CD4-positive, alpha-beta memory T cell (primary cell): ENCODE measurements at regions of chr10 and their contacts with region 1.

Region 1: DNA sequence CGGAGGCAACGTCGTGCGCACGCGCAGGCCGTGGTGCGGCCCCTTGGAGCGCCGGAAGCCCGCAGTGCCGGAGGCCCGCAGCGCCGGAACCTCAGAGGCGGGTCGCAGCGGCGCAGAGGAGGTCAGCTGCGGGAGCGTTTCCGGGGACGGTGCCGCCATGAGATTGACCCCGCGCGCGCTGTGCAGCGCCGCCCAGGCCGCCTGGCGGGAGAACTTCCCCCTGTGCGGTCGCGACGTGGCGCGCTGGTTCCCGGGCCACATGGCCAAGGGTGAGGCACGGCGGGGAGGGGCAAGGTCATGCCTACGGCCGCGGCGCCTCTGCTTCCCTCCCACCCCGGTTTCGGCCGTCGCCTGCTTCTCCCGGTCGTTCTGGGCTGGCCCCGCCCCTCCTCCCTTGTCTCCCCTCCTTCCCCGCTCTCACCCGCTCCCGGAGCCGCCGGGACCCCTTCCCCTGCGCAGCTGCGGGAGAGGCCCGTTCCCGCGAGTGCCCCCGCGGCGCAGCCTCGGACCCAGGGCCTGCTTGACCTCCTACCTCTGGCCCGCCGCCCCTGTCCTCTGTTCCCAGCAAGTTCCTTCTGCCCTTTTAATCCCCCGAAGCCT is at the start of gene MTG1:
- DNase-seq: peak; percentile 85 to 93 (median 89)
- H3K4me3 ChIP-seq: peak within 1 kb of the TSS; percentile 69 to 89
- H3K4me3 Mint-ChIP-seq: peak within 1 kb of the TSS; percentile 88 to 95 (median 90)
- H3K27ac ChIP-seq: peak within 1 kb of the TSS; percentile 78
- H3K27ac Mint-ChIP-seq: peak within 1 kb of the TSS; percentile 83 to 94 (median 88)
- H3K4me1 ChIP-seq: peaks cover 60% of the 10 kb centered on the region
- H3K4me1 Mint-ChIP-seq: peaks cover 28 to 65% (median 44%) of the 10 kb centered on the region in 4 donors
- H3K27me3 ChIP-seq: no peaks in the 10 kb centered on the region
- H3K27me3 Mint-ChIP-seq: no peaks in the 10 kb centered on the region
- total RNA-seq, gene MTG1: 64.8 to 65.4 TPM

Region 2: GRCh38 chr10:132163278-132163765 is 1230.8 kb before region 1 on chr10:
- CTCF ChIA-PET with region 1: no interaction called
- POLR2A ChIA-PET with region 1: no interaction called
- intact Hi-C with region 1: no loop called
- DNase-seq: peak in 4 of 5 donors; percentile 32 to 64 (median 40)
- H3K4me3 ChIP-seq: no peak overlapping the region
- H3K4me3 Mint-ChIP-seq: peak overlapping the region in 1 of 8 donors; percentile 54
- H3K27ac ChIP-seq: no peak overlapping the region
- H3K27ac Mint-ChIP-seq: peak overlapping the region in 6 of 7 donors; percentile 17 to 99 (median 88)
- H3K4me1 ChIP-seq: peaks cover 28% of the 10 kb centered on the region
- H3K4me1 Mint-ChIP-seq: peaks cover 16 to 46% (median 34%) of the 10 kb centered on the region in 4 donors
- H3K27me3 ChIP-seq: no peaks in the 10 kb centered on the region
- H3K27me3 Mint-ChIP-seq: no peaks in the 10 kb centered on the region

Region 3: DNA sequence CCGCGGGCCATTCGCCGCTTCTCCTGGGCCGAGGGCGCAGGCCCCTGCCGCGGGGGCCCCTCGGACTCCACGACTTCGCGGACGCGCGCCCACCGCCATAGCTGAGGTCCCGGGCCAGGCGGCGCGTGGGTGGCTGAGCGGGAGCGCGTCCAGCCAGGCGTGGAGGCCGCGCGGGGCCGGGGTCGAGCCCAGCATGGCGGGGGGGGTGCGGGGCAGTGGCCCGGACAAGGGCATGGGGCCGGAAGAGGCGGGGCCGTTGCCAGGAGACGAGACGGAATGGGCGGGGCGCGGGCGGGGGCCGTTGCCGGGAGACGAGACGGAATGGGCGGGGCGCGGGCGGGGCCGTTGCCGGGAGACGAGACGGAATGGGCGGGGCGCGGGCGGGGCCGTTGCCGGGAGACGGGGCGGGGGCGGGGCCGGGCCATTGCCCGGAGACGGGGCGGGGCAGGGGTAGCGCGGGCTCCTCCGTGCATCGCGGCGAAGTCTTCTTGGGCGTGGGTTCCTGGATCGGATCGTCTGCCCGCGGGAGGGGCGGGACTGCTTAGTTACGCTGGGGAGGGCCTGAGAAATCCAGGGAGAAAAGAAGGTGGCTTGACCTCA is 132.3 kb before region 1 on chr10:
- CTCF ChIA-PET with region 1: no interaction called
- POLR2A ChIA-PET with region 1: interaction called, 3 read pairs
- intact Hi-C with region 1: loop called (anchors 5 kb)
- DNase-seq: peak; percentile 75 to 83 (median 78)
- H3K4me3 ChIP-seq: peak overlapping the region in 1 of 2 donors; percentile 46
- H3K4me3 Mint-ChIP-seq: peak overlapping the region; percentile 70 to 79 (median 76)
- H3K27ac ChIP-seq: peak overlapping the region; percentile 83
- H3K27ac Mint-ChIP-seq: peak overlapping the region; percentile 90 to 98 (median 92)
- H3K4me1 ChIP-seq: peaks cover 85% of the 10 kb centered on the region
- H3K4me1 Mint-ChIP-seq: peaks cover 29 to 86% (median 66%) of the 10 kb centered on the region in 4 donors
- H3K27me3 ChIP-seq: no peaks in the 10 kb centered on the region
- H3K27me3 Mint-ChIP-seq: peaks cover 0 to 4% of the 10 kb centered on the region in 2 donors

Region 4: DNA sequence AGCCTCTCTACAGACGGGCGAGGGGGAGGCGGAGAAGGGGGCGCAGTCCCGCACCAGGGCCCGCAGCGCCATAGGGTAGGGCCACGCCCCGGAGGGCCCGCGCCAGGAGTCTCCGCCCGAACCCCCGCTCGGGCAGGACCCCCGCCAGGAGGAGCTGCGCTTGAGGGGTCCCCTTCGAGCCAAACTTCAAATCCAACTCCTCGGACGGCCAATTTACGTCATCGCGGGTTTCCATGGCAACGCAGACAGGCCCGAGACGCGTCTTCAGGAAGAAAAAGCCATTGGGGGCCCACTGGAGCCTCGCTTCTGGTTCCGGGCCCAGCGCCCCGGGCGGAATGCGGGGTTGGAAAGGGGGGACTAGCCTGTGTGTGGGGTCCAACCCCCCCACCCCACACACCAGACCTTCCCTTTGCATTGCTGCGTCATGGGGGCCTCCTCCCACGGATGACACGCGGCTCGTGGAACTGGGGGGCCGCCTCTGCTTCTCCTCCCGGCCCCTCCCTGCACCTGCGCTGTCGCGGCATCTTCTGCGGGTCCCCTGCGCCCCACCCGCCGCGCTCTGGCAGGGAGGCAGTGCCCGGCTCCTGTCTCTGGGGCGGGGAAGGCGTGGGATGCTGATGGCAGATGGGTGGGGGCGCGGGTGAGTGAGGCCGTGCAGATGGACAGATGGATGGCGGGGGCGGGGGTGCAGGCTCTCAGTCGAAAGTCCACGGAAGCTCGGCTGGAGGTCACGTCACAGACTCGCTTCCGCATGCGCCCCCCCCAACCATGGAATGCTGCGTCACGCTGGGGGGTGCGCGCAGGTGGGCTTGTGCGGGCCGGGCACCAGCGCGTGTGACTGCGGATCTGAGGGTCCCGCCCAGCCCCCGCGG is 58.7 kb before region 1 on chr10:
- CTCF ChIA-PET with region 1: interaction called, 26 read pairs
- POLR2A ChIA-PET with region 1: interaction called, 25 read pairs
- intact Hi-C with region 1: loop called (anchors 2 kb)
- DNase-seq: peak; percentile 85 to 95 (median 86)
- H3K4me3 ChIP-seq: peak overlapping the region in 1 of 2 donors; percentile 57
- H3K4me3 Mint-ChIP-seq: peak overlapping the region; percentile 69 to 90 (median 78)
- H3K27ac ChIP-seq: peak overlapping the region; percentile 64
- H3K27ac Mint-ChIP-seq: peak overlapping the region in 6 of 7 donors; percentile 90 to 98 (median 94)
- H3K4me1 ChIP-seq: peaks cover 25% of the 10 kb centered on the region
- H3K4me1 Mint-ChIP-seq: peaks cover 0 to 22% (median 3%) of the 10 kb centered on the region in 4 donors
- H3K27me3 ChIP-seq: no peaks in the 10 kb centered on the region
- H3K27me3 Mint-ChIP-seq: peaks cover 0 to 1% of the 10 kb centered on the region in 2 donors

Region 5: GRCh38 chr10:133357285-133358151 is 36.6 kb before region 1 on chr10 and contains the start of gene FUOM:
- CTCF ChIA-PET with region 1: no interaction called
- POLR2A ChIA-PET with region 1: interaction called, 38 read pairs
- intact Hi-C with region 1: loop called (anchors 5 kb)
- DNase-seq: peak; percentile 76 to 79 (median 77)
- H3K4me3 ChIP-seq: peak within 1 kb of the TSS in 1 of 2 donors; percentile 63
- H3K4me3 Mint-ChIP-seq: peak within 1 kb of the TSS; percentile 67 to 82 (median 78)
- H3K27ac ChIP-seq: peak within 1 kb of the TSS; percentile 52
- H3K27ac Mint-ChIP-seq: peak within 1 kb of the TSS in 4 of 7 donors; percentile 43 to 62 (median 56)
- H3K4me1 ChIP-seq: peaks cover 8% of the 10 kb centered on the region
- H3K4me1 Mint-ChIP-seq: peaks cover 0 to 9% (median 5%) of the 10 kb centered on the region in 4 donors
- H3K27me3 ChIP-seq: no peaks in the 10 kb centered on the region
- H3K27me3 Mint-ChIP-seq: no peaks in the 10 kb centered on the region
- total RNA-seq, gene FUOM: 17.1 to 18.1 TPM

Region 6: GRCh38 chr10:133373104-133373624 is 21.0 kb before region 1 on chr10 and contains the start of gene ECHS1:
- CTCF ChIA-PET with region 1: interaction called, 6 read pairs
- POLR2A ChIA-PET with region 1: interaction called, 68 read pairs
- intact Hi-C with region 1: loop called (anchors 1 kb)
- DNase-seq: peak; percentile 90 to 95 (median 91)
- H3K4me3 ChIP-seq: peak within 1 kb of the TSS in 1 of 2 donors; percentile 63
- H3K4me3 Mint-ChIP-seq: peak within 1 kb of the TSS; percentile 69 to 86 (median 82)
- H3K27ac ChIP-seq: peak within 1 kb of the TSS; percentile 51
- H3K27ac Mint-ChIP-seq: peak within 1 kb of the TSS in 6 of 7 donors; percentile 13 to 90 (median 78)
- H3K4me1 ChIP-seq: peaks cover 18% of the 10 kb centered on the region
- H3K4me1 Mint-ChIP-seq: peaks cover 2 to 24% (median 14%) of the 10 kb centered on the region in 4 donors
- H3K27me3 ChIP-seq: no peaks in the 10 kb centered on the region
- H3K27me3 Mint-ChIP-seq: no peaks in the 10 kb centered on the region
- total RNA-seq, gene ECHS1: 29.7 to 30.6 TPM

Region 7: DNA sequence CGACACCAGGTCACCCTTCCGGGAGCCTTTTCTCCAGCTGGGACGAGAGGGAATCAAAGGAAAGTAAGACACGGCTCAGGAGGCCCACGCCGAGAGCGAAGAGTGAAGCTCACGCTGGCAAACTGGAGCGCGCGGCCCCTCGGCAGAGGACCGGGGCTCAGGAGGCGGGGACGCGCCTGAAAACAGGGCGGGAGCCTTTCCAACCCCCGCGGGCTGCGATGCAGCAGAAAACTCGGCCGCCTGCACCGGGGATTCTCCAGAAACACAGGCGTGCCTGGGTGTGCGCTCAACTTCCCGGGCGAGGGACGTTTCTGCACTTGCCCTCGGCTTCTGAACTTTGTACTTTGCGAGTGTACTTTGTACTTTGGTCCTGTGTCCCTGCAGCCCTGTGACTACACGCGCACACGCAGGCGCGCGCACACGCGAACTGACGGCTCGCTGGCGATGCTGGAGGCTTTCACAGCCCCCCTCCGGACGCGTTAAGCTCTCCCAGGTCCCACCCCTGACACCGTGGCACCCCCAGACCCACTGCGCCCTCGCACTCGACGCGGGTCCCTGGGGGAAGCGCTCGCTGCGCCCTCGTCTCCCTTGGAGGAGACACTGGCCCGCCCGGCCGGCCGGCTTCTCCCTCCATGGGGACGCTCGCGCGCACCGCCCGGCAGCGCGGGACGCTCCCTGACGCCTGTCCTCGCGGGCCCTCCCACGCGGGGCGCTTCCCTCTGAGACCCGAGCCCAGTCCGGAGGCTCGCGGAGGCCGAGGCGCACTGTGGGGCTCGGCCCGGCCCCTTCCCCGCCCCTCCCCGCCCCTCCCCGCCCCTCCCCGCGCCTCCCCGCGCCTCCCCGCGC is 15.7 kb before region 1 on chr10:
- CTCF ChIA-PET with region 1: interaction called, 6 read pairs
- POLR2A ChIA-PET with region 1: interaction called, 68 read pairs
- intact Hi-C with region 1: loop called (anchors 1 kb)
- DNase-seq: peak; percentile 57 to 68 (median 60)
- H3K4me3 ChIP-seq: peak overlapping the region; percentile 57 to 96
- H3K4me3 Mint-ChIP-seq: peak overlapping the region; percentile 86 to 91 (median 88)
- H3K27ac ChIP-seq: peak overlapping the region; percentile 60
- H3K27ac Mint-ChIP-seq: peak overlapping the region in 6 of 7 donors; percentile 68 to 85 (median 76)
- H3K4me1 ChIP-seq: peaks cover 17% of the 10 kb centered on the region
- H3K4me1 Mint-ChIP-seq: peaks cover 4 to 20% (median 8%) of the 10 kb centered on the region in 4 donors
- H3K27me3 ChIP-seq: no peaks in the 10 kb centered on the region
- H3K27me3 Mint-ChIP-seq: no peaks in the 10 kb centered on the region

Region 8: DNA sequence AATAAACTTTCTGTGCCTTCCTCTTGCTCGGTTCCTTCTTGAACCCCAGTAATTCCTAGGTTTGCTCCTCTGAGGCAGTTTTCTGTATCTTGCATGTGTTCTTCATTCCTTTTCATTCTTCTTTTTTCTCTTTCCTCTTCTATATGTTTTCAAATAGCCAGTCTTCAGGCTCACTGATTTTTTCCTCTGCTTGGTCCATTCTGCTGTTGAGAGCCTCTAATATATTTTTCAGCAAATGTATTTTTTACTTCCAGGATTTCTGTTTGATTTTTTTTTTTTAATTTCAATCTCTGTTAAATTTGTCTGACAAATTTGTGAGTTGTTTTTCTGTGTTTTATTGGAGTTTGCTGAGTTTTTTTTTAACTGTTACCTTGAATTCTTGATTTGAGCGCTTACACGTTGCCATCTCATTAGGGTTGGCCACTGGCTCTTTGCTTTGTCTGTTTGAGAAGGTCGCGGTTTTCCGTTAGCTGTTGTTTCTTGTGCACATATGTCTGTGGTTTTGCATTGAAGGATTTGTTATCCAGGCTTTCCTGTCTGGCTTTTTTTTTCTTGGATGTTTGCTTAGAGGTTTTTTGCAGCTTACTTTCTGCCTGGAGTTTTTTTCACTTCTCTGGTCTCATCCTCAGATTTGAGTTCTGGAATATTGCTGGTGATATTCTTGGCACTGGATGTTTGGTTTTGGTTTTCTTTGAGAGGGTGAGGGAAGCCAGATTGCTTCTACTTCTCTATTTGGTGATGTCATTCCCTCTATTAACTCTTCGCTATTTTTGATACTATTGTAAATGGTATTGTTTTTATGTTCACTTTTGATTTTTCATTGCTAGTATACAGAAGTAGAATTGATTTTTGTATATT is 17.6 kb after region 1 on chr10:
- CTCF ChIA-PET with region 1: no interaction called
- POLR2A ChIA-PET with region 1: no interaction called
- intact Hi-C with region 1: no loop called
- DNase-seq: no peak
- H3K4me3 ChIP-seq: no peak overlapping the region
- H3K4me3 Mint-ChIP-seq: peak overlapping the region in 1 of 8 donors; percentile 54
- H3K27ac ChIP-seq: no peak overlapping the region
- H3K27ac Mint-ChIP-seq: peak overlapping the region in 2 of 7 donors; percentile 18 to 48
- H3K4me1 ChIP-seq: no peaks in the 10 kb centered on the region
- H3K4me1 Mint-ChIP-seq: peaks cover 18 to 30% (median 22%) of the 10 kb centered on the region in 4 donors
- H3K27me3 ChIP-seq: no peaks in the 10 kb centered on the region
- H3K27me3 Mint-ChIP-seq: no peaks in the 10 kb centered on the region